CD8-positive, alpha-beta T cell (primary cell): ENCODE measurements at regions of chr16 and their contacts with region 1.

Region 1: GRCh38 chr16:50326949-50327402 is 41.8 kb downstream of the BRD7 start:
- DNase-seq: peak; percentile 32 to 92 (median 76)
- ATAC-seq: peak; percentile 91
- H3K4me3 ChIP-seq: no peak overlapping the region
- H3K4me3 Mint-ChIP-seq: no peak overlapping the region
- H3K27ac ChIP-seq: peak overlapping the region in 1 of 2 experiments; percentile 60
- H3K27ac Mint-ChIP-seq: peak overlapping the region; percentile 88
- H3K4me1 ChIP-seq: peaks cover 24% of the 10 kb centered on the region
- H3K4me1 Mint-ChIP-seq: peaks cover 74% of the 10 kb centered on the region
- H3K27me3 ChIP-seq: no peaks in the 10 kb centered on the region
- H3K27me3 Mint-ChIP-seq: no peaks in the 10 kb centered on the region
- CTCF ChIP-seq: peak; percentile 76

Region 2: GRCh38 chr16:49542391-49542891 is 784.5 kb before region 1 on chr16:
- CTCF ChIA-PET with region 1: no interaction called
- POLR2A ChIA-PET with region 1: no interaction called
- intact Hi-C with region 1: no loop called
- DNase-seq: no peak
- ATAC-seq: no peak
- H3K4me3 ChIP-seq: no peak overlapping the region
- H3K4me3 Mint-ChIP-seq: no peak overlapping the region
- H3K27ac ChIP-seq: no peak overlapping the region
- H3K27ac Mint-ChIP-seq: no peak overlapping the region
- H3K4me1 ChIP-seq: no peaks in the 10 kb centered on the region
- H3K4me1 Mint-ChIP-seq: no peaks in the 10 kb centered on the region
- H3K27me3 ChIP-seq: no peaks in the 10 kb centered on the region
- H3K27me3 Mint-ChIP-seq: no peaks in the 10 kb centered on the region
- CTCF ChIP-seq: no peak

Region 3: GRCh38 chr16:50210266-50211038 is 116.5 kb before region 1 on chr16:
- CTCF ChIA-PET with region 1: interaction called, 9 read pairs
- POLR2A ChIA-PET with region 1: no interaction called
- intact Hi-C with region 1: loop called in 1 of 2 experiments (anchors 10 kb)
- DNase-seq: peak; percentile 34 to 76 (median 60)
- ATAC-seq: peak; percentile 90
- H3K4me3 ChIP-seq: no peak overlapping the region
- H3K4me3 Mint-ChIP-seq: no peak overlapping the region
- H3K27ac ChIP-seq: no peak overlapping the region
- H3K27ac Mint-ChIP-seq: peak overlapping the region; percentile 72
- H3K4me1 ChIP-seq: peaks cover 3% of the 10 kb centered on the region
- H3K4me1 Mint-ChIP-seq: peaks cover 39% of the 10 kb centered on the region
- H3K27me3 ChIP-seq: no peaks in the 10 kb centered on the region
- H3K27me3 Mint-ChIP-seq: no peaks in the 10 kb centered on the region
- CTCF ChIP-seq: peak; percentile 61

Region 4: GRCh38 chr16:50273681-50274325 is 53.2 kb before region 1 on chr16:
- CTCF ChIA-PET with region 1: interaction called, 23 read pairs
- POLR2A ChIA-PET with region 1: interaction called, 13 read pairs
- intact Hi-C with region 1: no loop called
- DNase-seq: peak in 5 of 9 experiments; percentile 39 to 68 (median 50)
- ATAC-seq: peak; percentile 32
- H3K4me3 ChIP-seq: peak overlapping the region; percentile 46 to 80
- H3K4me3 Mint-ChIP-seq: peak overlapping the region; percentile 86
- H3K27ac ChIP-seq: peak overlapping the region; percentile 81 to 88
- H3K27ac Mint-ChIP-seq: peak overlapping the region; percentile 98
- H3K4me1 ChIP-seq: peaks cover 97% of the 10 kb centered on the region
- H3K4me1 Mint-ChIP-seq: peaks cover 97% of the 10 kb centered on the region
- H3K27me3 ChIP-seq: no peaks in the 10 kb centered on the region
- H3K27me3 Mint-ChIP-seq: no peaks in the 10 kb centered on the region
- CTCF ChIP-seq: no peak

Region 5: DNA sequence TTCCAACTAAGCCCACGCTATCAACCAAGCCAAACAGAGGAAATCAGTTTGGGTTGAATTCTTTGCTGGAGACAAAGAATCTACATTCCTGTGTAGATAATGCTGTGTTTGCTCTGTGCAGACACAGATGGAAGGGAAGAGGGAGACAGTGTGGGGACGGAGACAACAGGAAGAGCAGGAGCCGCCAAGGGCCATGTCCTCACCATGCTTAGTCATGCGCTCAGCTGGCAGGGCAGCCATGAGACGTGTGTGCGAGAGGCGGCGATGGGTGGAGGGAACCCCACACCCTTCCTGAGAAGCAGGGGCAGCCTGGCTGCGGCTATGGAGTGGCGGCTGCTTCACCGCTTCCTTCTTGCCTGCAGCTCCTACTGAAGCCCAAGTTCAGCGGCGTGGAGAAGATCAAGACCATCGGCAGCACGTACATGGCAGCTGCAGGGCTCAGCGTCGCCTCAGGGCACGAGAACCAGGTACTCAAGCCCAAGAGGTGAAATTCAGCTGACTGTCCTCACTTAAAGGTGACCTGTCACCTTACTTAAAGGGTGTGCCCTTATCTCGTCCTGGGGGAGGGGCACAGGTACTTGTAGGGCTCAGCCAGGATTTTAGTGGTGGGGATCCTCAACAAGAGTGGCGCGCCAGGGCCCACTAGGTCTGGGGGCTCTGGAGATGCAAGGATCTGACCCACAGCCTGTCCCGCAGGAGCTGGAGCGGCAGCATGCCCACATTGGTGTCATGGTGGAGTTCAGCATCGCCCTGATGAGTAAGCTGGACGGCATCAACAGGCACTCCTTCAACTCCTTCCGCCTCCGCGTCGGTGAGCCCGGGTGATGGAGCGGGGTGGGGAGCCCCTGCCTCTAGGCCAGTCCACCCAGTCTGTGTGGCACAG is 13.1 kb before region 1 on chr16:
- CTCF ChIA-PET with region 1: interaction called, 17 read pairs
- POLR2A ChIA-PET with region 1: interaction called, 4 read pairs
- intact Hi-C with region 1: no loop called
- DNase-seq: peak in 8 of 9 experiments; percentile 21 to 76 (median 56)
- ATAC-seq: peak; percentile 70
- H3K4me3 ChIP-seq: no peak overlapping the region
- H3K4me3 Mint-ChIP-seq: no peak overlapping the region
- H3K27ac ChIP-seq: peak overlapping the region in 1 of 2 experiments; percentile 51
- H3K27ac Mint-ChIP-seq: peak overlapping the region; percentile 84
- H3K4me1 ChIP-seq: peaks cover 22% of the 10 kb centered on the region
- H3K4me1 Mint-ChIP-seq: peaks cover 24% of the 10 kb centered on the region
- H3K27me3 ChIP-seq: no peaks in the 10 kb centered on the region
- H3K27me3 Mint-ChIP-seq: no peaks in the 10 kb centered on the region
- CTCF ChIP-seq: no peak

Region 6: GRCh38 chr16:50368410-50369132 is 41.6 kb after region 1 on chr16 and contains the start of gene BRD7:
- CTCF ChIA-PET with region 1: interaction called, 9 read pairs
- POLR2A ChIA-PET with region 1: interaction called, 5 read pairs
- intact Hi-C with region 1: loop called (anchors 5 kb)
- DNase-seq: peak; percentile 60 to 88 (median 71)
- ATAC-seq: peak; percentile 94
- H3K4me3 ChIP-seq: peak within 1 kb of the TSS; percentile 54 to 60
- H3K4me3 Mint-ChIP-seq: peak within 1 kb of the TSS; percentile 85
- H3K27ac ChIP-seq: peak within 1 kb of the TSS; percentile 56 to 79
- H3K27ac Mint-ChIP-seq: peak within 1 kb of the TSS; percentile 95
- H3K4me1 ChIP-seq: peaks cover 41% of the 10 kb centered on the region
- H3K4me1 Mint-ChIP-seq: peaks cover 52% of the 10 kb centered on the region
- H3K27me3 ChIP-seq: no peaks in the 10 kb centered on the region
- H3K27me3 Mint-ChIP-seq: no peaks in the 10 kb centered on the region
- CTCF ChIP-seq: no peak
- total RNA-seq, gene BRD7: 113 to 117 TPM

Region 7: GRCh38 chr16:50644729-50645128 is 317.8 kb after region 1 on chr16:
- CTCF ChIA-PET with region 1: interaction called, 11 read pairs
- POLR2A ChIA-PET with region 1: no interaction called
- intact Hi-C with region 1: loop called (anchors 1 to 5 kb)
- DNase-seq: peak in 8 of 9 experiments; percentile 12 to 69 (median 52)
- ATAC-seq: peak; percentile 77
- H3K4me3 ChIP-seq: no peak overlapping the region
- H3K4me3 Mint-ChIP-seq: no peak overlapping the region
- H3K27ac ChIP-seq: no peak overlapping the region
- H3K27ac Mint-ChIP-seq: no peak overlapping the region
- H3K4me1 ChIP-seq: no peaks in the 10 kb centered on the region
- H3K4me1 Mint-ChIP-seq: peaks cover 5% of the 10 kb centered on the region
- H3K27me3 ChIP-seq: no peaks in the 10 kb centered on the region
- H3K27me3 Mint-ChIP-seq: peaks cover 2% of the 10 kb centered on the region
- CTCF ChIP-seq: peak; percentile 46

Region 8: DNA sequence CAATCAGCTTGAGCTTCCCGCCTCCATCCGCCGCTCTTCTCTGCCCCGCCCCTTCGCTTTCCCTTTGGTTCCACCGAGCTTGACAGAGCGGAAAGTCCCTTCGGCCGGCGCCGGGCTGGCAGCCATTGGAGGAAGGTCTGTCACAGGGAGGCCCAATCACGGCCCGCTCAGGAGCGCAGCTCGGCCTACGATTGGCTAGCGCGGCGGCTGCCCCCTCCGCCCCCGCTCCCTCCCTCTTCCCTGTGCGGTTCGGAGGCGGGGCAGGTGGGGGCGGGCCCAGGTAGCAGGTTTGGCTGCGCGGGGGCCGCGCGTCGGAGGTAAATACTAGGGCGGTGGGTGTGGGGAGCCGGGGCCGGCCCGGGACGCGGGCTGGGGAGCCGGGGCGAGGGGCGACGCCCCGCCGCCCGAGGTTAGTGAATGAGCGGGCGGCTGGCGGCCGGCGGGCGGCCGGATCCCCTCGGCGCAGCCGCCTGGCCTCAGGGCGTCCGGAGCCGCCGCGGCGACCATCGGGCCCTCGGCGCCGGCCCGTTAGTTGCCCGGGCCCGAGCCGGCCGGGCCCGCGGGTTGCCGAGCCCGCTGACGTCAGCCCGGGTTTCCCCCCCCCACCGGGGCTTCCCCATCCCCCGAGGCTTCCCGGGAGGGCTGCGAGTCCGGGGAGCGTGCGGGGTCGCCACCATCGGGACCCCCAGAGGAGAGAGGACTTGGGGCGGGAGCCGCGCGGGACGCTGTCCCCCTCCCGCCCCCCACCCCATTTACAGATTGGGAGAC is 415.0 kb after region 1 on chr16 and contains the start of gene CYLD:
- CTCF ChIA-PET with region 1: interaction called, 8 read pairs
- POLR2A ChIA-PET with region 1: no interaction called
- intact Hi-C with region 1: loop called (anchors 5 to 10 kb)
- DNase-seq: peak; percentile 97 to 100 (median 99)
- ATAC-seq: peak; percentile 88
- H3K4me3 ChIP-seq: peak within 1 kb of the TSS; percentile 91 to 93
- H3K4me3 Mint-ChIP-seq: peak within 1 kb of the TSS; percentile 98
- H3K27ac ChIP-seq: peak within 1 kb of the TSS; percentile 95 to 99
- H3K27ac Mint-ChIP-seq: peak within 1 kb of the TSS; percentile 99
- H3K4me1 ChIP-seq: peaks cover 36% of the 10 kb centered on the region
- H3K4me1 Mint-ChIP-seq: peaks cover 45% of the 10 kb centered on the region
- H3K27me3 ChIP-seq: no peaks in the 10 kb centered on the region
- H3K27me3 Mint-ChIP-seq: no peaks in the 10 kb centered on the region
- CTCF ChIP-seq: no peak
- total RNA-seq, gene CYLD: 341 TPM